ENCODE measurements at regions of chr1 and their contacts with region 1.

Region 1: DNA sequence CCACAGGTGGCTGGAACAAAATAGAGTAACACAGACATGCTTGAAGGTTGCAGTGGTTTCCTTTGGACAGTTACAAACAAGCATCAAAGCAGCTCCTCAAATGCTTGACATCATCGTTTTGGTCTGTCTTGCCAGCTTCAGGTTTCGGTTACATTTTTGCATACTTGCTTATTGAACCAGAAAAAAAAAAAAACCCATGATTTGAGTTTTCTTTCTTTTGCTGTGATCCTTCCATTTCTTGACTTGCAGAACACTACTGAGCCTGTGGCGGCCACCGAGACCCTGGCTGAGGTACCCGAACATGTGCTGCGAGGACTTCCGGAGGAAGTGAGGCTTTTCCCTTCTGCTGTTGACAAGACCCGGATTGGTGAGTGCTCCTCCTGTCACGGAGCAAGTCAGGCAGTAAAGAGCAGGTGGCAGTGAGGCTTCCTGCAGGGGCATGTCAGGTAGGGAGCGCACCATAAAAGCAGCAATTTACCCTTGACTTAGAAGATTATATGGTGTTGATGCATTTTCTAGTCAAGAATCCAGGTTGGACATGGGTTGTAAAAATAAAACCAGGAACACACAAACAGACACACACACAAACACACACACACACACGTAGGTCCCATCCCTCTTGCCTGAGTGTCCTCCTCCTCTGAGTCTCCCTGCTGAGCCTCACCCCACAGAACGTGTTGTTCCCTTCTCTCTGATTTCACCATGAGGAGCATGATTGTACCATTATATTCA is 30.9 kb downstream of the PRDM2 start:
- DNase-seq: peak; percentile 67 to 92 (median 89)
- H3K4me3 ChIP-seq: peak overlapping the region; percentile 33
- H3K4me3 Mint-ChIP-seq: peak overlapping the region; percentile 70 to 93 (median 84)
- H3K27ac ChIP-seq: peak overlapping the region; percentile 57
- H3K27ac Mint-ChIP-seq: peak overlapping the region; percentile 96 to 100 (median 98)
- H3K4me1 ChIP-seq: peaks cover 67% of the 10 kb centered on the region
- H3K4me1 Mint-ChIP-seq: peaks cover 78 to 95% (median 93%) of the 10 kb centered on the region in 3 donors
- H3K27me3 ChIP-seq: no peaks in the 10 kb centered on the region
- H3K27me3 Mint-ChIP-seq: no peaks in the 10 kb centered on the region

Region 2: DNA sequence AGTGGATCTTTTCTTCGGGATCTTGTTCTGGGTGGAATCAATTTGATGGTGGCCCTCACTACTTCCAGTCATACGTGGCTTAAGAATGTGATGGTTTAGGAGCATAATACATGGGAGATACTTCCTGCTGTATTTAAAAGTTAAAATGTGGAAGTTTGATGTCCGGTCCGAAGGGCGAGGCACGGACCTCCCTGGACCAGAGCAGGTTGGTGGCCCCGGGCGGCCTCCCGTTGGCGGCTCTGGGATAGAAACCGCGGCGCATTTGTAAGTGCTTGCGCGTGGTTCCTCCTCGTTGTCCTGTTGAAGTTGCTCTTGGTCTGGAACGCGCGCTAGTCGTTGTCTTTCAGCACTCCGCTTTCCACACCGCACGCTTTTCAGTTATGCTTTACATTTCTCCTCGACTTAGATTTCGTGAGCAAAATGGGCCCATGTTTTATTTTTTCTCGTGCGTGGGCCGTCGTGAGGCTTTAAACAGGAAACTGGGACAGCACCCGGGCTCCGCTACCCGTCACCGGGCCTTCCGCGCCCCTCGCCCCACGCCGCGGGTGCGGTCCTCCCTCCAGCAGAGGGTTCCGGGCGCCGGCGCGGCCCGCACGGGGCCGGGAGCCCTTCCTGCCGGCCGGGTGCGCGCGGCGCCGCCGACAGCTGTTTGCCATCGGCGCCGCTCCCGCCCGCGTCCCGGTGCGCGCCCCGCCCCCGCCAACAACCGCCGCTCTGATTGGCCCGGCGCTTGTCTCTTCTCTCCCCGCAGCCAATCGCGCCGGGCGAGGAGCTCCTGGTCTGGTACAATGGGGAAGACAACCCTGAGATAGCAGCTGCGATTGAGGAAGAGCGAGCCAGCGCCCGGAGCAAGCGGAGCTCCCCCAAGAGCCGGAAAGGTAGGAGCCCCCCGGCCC is 17.9 kb after region 1 on chr1:
- CTCF ChIA-PET with region 1: interaction called, 10 read pairs
- POLR2A ChIA-PET with region 1: interaction called, 32 read pairs
- DNase-seq: peak; percentile 96 to 97 (median 96)
- H3K4me3 ChIP-seq: peak overlapping the region; percentile 64
- H3K4me3 Mint-ChIP-seq: peak overlapping the region; percentile 88 to 97 (median 92)
- H3K27ac ChIP-seq: peak overlapping the region; percentile 84
- H3K27ac Mint-ChIP-seq: peak overlapping the region; percentile 88 to 97 (median 96)
- H3K4me1 ChIP-seq: peaks cover 44% of the 10 kb centered on the region
- H3K4me1 Mint-ChIP-seq: peaks cover 44 to 72% (median 68%) of the 10 kb centered on the region in 3 donors
- H3K27me3 ChIP-seq: no peaks in the 10 kb centered on the region
- H3K27me3 Mint-ChIP-seq: peaks cover 0 to 4% of the 10 kb centered on the region in 2 donors

Region 3: GRCh38 chr1:13832580-13832979 is 101.7 kb after region 1 on chr1:
- CTCF ChIA-PET with region 1: no interaction called
- POLR2A ChIA-PET with region 1: no interaction called
- DNase-seq: no peak
- H3K4me3 ChIP-seq: no peak overlapping the region
- H3K4me3 Mint-ChIP-seq: no peak overlapping the region
- H3K27ac ChIP-seq: no peak overlapping the region
- H3K27ac Mint-ChIP-seq: peak overlapping the region in 1 of 8 donors; percentile 39
- H3K4me1 ChIP-seq: no peaks in the 10 kb centered on the region
- H3K4me1 Mint-ChIP-seq: peaks cover 0 to 6% (median 0%) of the 10 kb centered on the region in 3 donors
- H3K27me3 ChIP-seq: peaks cover 4% of the 10 kb centered on the region
- H3K27me3 Mint-ChIP-seq: peaks cover 9 to 22% of the 10 kb centered on the region in 2 donors